Activated CD8-positive, alpha-beta T cell treated with anti-CD3 and anti-CD28 coated beads, Interleukin-2, amount 10 ng/mL, durations not matched to agents 7 days and 5 days (primary cell): ENCODE measurements at regions of chr18 and their contacts with region 1.

Region 1: GRCh38 chr18:63320046-63320689 is 599 bp upstream of the BCL2 start:
- DNase-seq: peak; percentile 93
- ATAC-seq: peak; percentile 81
- H3K4me3 Mint-ChIP-seq: peak overlapping the region; percentile 94
- H3K27ac Mint-ChIP-seq: peak overlapping the region; percentile 91
- H3K4me1 Mint-ChIP-seq: peaks cover 27% of the 10 kb centered on the region
- H3K27me3 Mint-ChIP-seq: no peaks in the 10 kb centered on the region

Region 2: DNA sequence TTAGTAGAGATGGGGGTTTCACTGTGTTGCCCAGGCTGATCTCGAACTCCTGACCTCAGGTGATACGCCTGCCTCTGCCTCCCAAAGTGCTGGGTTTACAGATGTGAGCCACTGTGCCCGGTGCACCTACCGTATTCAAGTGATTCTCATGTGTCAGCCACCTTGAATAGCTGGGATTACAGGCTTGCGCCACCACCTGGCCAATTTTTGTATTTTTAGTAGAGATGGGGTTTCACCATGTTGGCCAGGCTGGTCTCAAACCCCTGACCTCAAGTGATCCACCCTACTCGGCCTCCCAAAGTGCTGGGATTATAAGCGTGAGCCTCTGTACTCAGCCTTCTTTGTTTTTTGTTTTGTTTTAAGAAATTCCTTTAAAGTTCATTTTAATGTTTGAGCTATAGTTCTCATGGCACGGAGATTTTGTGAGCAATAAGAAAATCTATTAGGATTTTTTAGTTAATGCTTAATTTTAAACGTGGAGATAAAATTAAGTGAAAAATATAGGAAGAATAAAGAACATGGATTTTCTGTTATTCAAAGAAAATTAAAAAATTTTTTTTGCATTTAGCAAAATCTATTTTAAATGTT is 362.2 kb before region 1 on chr18:
- CTCF ChIA-PET with region 1: no interaction called
- POLR2A ChIA-PET with region 1: no interaction called
- DNase-seq: peak; percentile 61
- ATAC-seq: peak; percentile 63
- H3K4me3 Mint-ChIP-seq: no peak overlapping the region
- H3K27ac Mint-ChIP-seq: no peak overlapping the region
- H3K4me1 Mint-ChIP-seq: peaks cover 15% of the 10 kb centered on the region
- H3K27me3 Mint-ChIP-seq: no peaks in the 10 kb centered on the region

Region 3: GRCh38 chr18:63097178-63097577 is 223.0 kb before region 1 on chr18:
- CTCF ChIA-PET with region 1: interaction called, 10 read pairs
- POLR2A ChIA-PET with region 1: interaction called, 3 read pairs
- DNase-seq: peak; percentile 5
- ATAC-seq: no peak
- H3K4me3 Mint-ChIP-seq: no peak overlapping the region
- H3K27ac Mint-ChIP-seq: no peak overlapping the region
- H3K4me1 Mint-ChIP-seq: peaks cover 51% of the 10 kb centered on the region
- H3K27me3 Mint-ChIP-seq: peaks cover 28% of the 10 kb centered on the region

Region 4: DNA sequence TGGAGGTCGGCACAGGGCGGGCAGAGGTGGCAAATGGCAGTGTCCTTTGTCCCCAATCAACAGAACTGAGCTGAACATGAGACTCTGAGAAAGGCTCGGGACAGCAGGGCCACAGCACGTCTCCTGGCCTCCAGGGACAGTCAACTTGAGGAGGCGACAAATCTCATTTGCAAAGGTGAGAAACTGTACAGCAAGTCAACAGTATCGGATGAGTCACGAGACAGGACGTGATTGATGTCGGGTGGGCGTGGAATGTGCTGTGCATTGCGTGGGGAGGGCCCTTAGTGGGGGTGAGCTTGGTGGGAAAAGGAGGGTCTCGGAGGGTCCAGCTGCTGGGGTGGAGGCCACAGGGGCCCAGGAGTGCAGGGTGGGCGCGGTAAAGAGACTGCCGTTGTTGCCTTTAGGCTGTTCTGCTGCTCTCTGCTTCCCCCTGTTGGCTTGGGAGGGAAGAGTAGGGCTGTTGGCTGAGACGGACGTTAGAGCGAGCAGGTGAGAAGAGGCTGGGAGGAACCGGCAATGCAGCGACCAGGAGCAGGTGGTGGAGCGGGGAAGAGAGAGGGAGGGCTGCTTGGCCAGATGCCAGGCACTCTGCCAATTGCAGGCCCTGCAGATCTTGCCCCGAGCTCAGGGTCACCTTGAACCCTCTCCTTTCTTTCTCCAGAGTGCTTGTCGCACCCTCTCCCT is 164.9 kb before region 1 on chr18:
- CTCF ChIA-PET with region 1: interaction called, 57 read pairs
- POLR2A ChIA-PET with region 1: interaction called, 152 read pairs
- DNase-seq: peak; percentile 87
- ATAC-seq: peak; percentile 78
- H3K4me3 Mint-ChIP-seq: peak overlapping the region; percentile 78
- H3K27ac Mint-ChIP-seq: peak overlapping the region; percentile 93
- H3K4me1 Mint-ChIP-seq: peaks cover 98% of the 10 kb centered on the region
- H3K27me3 Mint-ChIP-seq: no peaks in the 10 kb centered on the region

Region 5: DNA sequence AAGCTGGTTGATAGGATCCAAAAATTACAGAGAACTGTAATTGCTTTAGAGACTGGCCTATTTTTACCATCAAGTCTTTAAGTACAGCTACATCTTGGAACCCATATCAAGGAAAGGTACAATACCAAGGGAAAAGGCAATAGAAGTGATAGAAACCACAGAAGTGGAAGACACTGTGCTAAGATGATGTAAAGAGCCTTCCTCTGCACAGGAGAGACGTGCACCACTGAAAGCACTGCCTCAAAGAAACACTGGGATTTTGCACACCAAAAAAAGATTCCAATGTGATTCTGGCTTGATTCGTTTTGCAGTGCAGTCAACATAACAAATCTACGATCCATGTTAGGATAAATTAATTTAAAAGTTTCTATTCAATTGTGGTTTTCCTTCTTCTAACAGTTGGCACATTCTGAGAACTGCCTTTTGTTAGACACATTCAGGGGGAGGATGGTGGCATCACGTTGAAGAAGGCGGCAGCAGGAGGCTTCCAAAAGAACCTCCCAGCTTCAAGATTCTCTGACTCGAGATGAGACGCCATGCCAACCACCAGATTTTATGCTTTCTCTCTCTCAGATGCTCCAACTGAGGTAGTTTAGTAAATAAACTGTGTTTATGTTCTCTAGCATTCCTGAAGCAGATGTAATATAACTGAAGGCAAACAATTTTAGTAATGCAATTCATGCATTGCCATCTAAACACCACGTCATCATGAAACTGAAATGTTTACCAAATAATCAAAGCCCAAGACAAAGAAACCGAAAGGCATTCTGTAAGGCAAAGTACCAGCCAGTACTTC is 103.5 kb before region 1 on chr18:
- CTCF ChIA-PET with region 1: interaction called, 54 read pairs
- POLR2A ChIA-PET with region 1: interaction called, 205 read pairs
- DNase-seq: peak; percentile 56
- ATAC-seq: peak; percentile 42
- H3K4me3 Mint-ChIP-seq: peak overlapping the region; percentile 72
- H3K27ac Mint-ChIP-seq: peak overlapping the region; percentile 90
- H3K4me1 Mint-ChIP-seq: peaks cover 98% of the 10 kb centered on the region
- H3K27me3 Mint-ChIP-seq: no peaks in the 10 kb centered on the region

Region 6: DNA sequence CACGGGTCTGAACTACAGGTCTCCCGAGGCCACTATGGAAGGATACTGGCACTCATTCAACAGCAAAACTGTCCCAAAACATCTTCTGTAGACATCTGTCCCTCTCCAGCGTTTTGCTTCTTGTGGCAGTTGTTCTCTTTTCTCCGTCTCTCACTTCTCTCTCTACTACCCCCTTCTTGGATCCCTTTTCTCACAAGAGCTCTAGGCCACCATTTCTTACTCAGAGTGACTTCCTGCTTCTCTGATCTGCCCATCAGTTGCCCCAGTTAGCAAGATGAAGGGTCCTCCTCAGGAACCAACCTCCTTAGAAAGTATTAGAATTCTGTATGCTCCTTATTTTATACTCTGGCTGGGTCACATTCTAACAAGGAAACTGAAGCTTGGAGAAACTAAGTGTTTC is 33.2 kb before region 1 on chr18:
- CTCF ChIA-PET with region 1: interaction called, 15 read pairs
- POLR2A ChIA-PET with region 1: no interaction called
- DNase-seq: no peak
- ATAC-seq: no peak
- H3K4me3 Mint-ChIP-seq: no peak overlapping the region
- H3K27ac Mint-ChIP-seq: no peak overlapping the region
- H3K4me1 Mint-ChIP-seq: peaks cover 61% of the 10 kb centered on the region
- H3K27me3 Mint-ChIP-seq: no peaks in the 10 kb centered on the region

Region 7: DNA sequence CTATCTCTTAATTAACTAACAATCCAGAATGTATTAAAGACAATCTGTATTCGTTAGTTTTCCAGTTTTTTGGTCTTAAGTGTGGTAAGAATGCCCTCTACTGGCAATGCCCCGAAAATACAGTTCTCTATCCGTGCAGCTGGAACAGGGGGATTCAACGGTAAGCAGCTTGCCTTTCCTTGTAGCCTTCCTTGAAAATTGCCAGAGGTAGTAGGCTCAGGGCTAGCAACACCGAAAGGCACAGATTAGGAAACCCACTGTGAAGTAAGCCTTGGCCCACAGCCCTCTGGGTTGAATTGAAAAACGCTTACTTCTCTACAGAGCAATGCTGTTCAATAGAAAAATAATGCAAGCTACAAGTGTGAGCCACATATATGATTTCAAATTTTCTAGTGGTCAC is 119.2 kb after region 1 on chr18:
- CTCF ChIA-PET with region 1: interaction called, 31 read pairs
- POLR2A ChIA-PET with region 1: no interaction called
- DNase-seq: peak; percentile 59
- ATAC-seq: peak; percentile 60
- H3K4me3 Mint-ChIP-seq: no peak overlapping the region
- H3K27ac Mint-ChIP-seq: no peak overlapping the region
- H3K4me1 Mint-ChIP-seq: peaks cover 3% of the 10 kb centered on the region
- H3K27me3 Mint-ChIP-seq: peaks cover 21% of the 10 kb centered on the region

Region 8: DNA sequence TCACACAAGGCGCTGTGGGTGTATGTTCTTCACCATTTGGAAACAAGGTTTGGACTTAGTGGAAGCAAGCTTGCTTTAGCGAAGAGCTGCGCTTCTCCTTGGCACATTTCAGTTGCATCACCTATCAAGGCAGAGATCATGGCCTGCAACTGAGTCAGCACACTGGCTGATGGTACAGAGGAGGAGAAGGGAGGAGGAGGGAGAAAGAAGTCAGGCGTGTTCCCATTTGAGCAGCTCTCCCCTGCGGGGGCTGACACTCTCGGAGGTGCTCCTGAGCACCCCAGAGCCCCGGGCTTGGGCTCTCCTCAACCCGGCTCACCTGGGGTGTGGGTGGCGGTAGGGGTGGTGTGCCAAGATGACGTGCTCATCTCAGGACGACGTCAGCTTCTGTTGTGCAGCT is 150.6 kb after region 1 on chr18:
- CTCF ChIA-PET with region 1: no interaction called
- POLR2A ChIA-PET with region 1: no interaction called
- DNase-seq: no peak
- ATAC-seq: no peak
- H3K4me3 Mint-ChIP-seq: no peak overlapping the region
- H3K27ac Mint-ChIP-seq: no peak overlapping the region
- H3K4me1 Mint-ChIP-seq: no peaks in the 10 kb centered on the region
- H3K27me3 Mint-ChIP-seq: peaks cover 23% of the 10 kb centered on the region